PC-3 (cell line): ENCODE measurements at regions of chr1 and their contacts with region 1.

Region 1: DNA sequence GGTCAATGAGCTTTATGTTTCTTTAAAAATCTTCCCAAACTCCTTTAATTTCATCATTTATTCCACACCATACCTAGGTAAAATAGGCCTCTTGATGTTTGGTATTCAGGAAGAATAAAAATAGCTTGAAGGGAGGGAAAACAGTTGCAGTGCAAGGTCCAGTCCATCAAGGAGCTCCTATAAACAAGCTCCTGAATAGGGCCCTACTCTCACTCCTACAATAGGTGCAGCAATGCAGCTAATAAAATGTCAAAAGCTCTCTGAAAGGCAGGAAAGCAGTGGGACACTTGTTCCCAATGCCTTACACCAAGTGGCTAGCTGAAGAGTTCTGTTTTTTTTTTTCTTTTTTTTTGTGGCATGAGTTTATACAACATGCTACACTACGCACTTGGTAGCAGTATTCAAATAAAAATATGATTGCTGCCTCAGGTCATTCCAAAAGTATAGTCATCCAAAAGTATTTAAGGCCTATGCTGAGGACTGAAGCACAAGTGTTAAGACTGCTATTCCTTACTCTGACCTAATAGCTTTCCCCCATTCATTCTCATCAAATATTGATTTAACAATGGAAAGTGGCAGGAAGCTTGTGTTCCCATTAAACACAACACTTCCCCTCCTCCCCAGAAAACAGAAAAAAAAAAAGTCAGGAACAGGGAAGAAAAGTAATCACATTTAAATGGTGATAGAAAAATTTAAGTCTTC is 9.8 kb downstream of the TEX38 start:
- DNase-seq: peak; percentile 18
- ATAC-seq: peak; percentile 56
- H3K4me3 ChIP-seq: no peak overlapping the region
- H3K27ac ChIP-seq: peak overlapping the region; percentile 43
- H3K4me1 ChIP-seq: peaks cover 18% of the 10 kb centered on the region
- H3K27me3 ChIP-seq: no peaks in the 10 kb centered on the region
- CTCF ChIP-seq: no peak

Region 2: DNA sequence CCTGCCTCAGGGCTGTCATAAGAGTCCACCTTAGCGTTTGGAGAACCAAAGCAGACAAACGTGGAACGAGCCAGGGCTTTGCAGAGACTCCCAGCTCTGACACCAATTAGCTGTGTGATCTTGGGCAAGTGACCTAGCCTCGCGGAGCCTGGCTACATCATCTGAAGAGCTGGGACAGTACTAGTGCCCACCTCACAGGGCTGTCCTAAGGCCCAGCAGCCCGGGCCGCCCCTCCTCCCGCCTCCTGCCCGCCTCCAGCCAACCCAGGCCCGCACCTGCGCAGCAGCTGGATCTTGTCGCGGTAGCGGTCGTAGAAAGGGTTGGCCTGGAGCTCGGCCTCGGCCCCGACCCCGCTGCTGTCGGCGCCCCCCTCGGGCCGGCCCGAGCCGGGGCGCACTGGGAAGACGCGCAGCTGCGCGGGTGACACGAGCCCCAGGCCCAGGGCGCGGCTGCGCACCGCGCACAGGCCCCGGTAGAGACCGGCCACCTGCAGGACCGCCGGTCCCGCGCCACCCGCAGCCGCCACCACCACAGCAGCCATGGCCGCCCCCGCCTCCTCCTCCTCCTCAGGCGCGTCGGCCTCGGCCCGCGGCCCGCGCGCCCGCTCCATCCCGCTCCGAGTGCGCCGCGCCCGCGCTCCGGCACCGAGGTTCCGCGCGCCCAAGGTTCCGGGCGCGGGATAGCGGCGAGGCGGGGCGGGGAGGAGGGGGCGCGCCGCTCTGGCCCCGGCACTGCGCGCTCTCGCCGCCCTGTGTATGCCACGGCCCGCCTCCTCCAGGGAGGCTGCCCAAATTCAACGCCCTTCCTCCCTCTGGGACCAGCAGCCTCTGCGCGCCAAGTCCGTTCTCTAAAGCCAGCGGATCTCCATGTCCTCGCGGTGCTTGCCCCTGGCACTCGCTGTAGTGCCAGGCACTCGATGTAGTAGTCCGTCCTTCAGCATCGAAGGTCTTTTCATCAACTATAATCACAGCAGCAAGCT is 13.4 kb before region 1 on chr1 and contains the start of gene ATPAF1:
- CTCF ChIA-PET with region 1: no interaction called
- POLR2A ChIA-PET with region 1: interaction called, 11 read pairs
- intact Hi-C with region 1: no loop called
- DNase-seq: peak; percentile 67
- ATAC-seq: peak; percentile 79
- H3K4me3 ChIP-seq: peak within 1 kb of the TSS; percentile 96
- H3K27ac ChIP-seq: no peak within 1 kb of the TSS
- H3K4me1 ChIP-seq: peaks cover 10% of the 10 kb centered on the region
- H3K27me3 ChIP-seq: no peaks in the 10 kb centered on the region
- CTCF ChIP-seq: no peak
- total RNA-seq, gene ATPAF1: 68.3 and 83.7 TPM in 2 replicates

Region 3: GRCh38 chr1:46948629-46949274 is 267.3 kb after region 1 on chr1:
- CTCF ChIA-PET with region 1: no interaction called
- POLR2A ChIA-PET with region 1: no interaction called
- intact Hi-C with region 1: no loop called
- DNase-seq: peak; percentile 67
- ATAC-seq: peak; percentile 62
- H3K4me3 ChIP-seq: no peak overlapping the region
- H3K27ac ChIP-seq: no peak overlapping the region
- H3K4me1 ChIP-seq: no peaks in the 10 kb centered on the region
- H3K27me3 ChIP-seq: peaks cover 3% of the 10 kb centered on the region; the same call in 1 of the 2 replicates
- CTCF ChIP-seq: no peak